ENCODE measurements at regions of chr17 and their contacts with region 1.

Region 1: DNA sequence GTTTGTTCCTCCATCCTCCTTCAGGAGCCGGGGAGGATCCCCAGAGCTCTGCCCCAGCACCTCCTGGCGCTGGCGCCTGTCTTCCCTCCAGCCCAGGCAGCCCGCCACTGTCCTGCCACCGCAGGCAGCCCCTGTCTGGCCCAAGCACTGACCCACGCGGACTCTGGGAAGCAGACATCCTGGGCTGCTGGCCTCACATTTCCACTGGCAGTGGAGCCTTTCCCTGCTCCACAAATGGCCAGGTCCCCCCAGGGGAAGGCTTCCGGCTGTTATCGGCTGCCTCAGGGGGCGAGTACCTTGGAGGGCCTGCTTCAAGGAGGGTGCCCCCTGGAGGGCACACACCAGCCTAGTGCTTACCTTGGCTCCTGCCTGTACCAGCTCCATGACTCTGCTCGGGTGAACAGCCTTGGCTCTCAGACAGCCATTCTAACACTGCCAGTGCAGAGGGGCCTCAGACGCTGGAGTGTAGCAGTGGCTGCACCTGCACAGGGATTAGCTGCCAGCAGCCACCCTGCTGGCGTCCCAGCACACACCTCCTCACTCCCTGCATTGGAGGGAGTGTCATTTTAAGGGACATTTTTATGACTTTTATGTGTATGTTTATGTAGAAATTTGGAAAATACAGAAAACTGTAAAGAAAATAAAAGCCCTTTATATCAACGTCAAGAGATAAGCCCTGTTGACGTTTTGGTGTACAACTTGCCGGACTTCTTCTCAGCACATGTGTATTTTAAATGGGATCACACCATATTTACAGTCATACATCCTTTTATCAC is 21.0 kb downstream of the ACE start:
- DNase-seq: peak; percentile 72
- ATAC-seq: peak; percentile 94
- H3K4me3 Mint-ChIP-seq: no peak overlapping the region
- H3K27ac Mint-ChIP-seq: 0 out of 2 replicates have a peak overlapping the region, but pooled peaks have one; percentile 36
- H3K4me1 Mint-ChIP-seq: peaks cover 8% of the 10 kb centered on the region
- H3K27me3 Mint-ChIP-seq: no peaks in the 10 kb centered on the region; the same call in 1 of the 2 replicates
- CTCF ChIP-seq: no peak

Region 2: DNA sequence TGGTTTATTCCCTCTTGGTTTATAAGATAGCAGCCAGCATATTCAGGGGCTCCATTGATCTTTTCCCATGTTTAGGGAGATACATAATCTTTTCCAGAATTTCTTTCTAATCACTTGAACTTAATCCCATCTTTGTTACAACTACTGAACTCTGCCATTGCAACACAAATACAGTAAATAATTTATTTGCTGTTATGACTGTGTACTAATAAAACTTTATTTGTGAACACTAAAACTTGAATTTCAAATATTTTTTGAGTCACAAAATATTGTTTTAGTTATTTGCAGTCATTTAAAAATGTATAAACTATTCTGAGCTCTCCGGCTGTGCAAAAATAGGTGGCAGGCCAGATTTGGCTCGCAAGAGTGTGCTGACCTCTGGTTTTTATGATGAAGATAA is 445.3 kb before region 1 on chr17:
- CTCF ChIA-PET with region 1: no interaction called
- POLR2A ChIA-PET with region 1: no interaction called
- DNase-seq: no peak
- ATAC-seq: no peak
- H3K4me3 Mint-ChIP-seq: no peak overlapping the region
- H3K27ac Mint-ChIP-seq: no peak overlapping the region
- H3K4me1 Mint-ChIP-seq: no peaks in the 10 kb centered on the region
- H3K27me3 Mint-ChIP-seq: no peaks in the 10 kb centered on the region; the same call in 1 of the 2 replicates
- CTCF ChIP-seq: no peak

Region 3: GRCh38 chr17:63445979-63446691 is 51.8 kb before region 1 on chr17 and contains the start of gene CYB561:
- CTCF ChIA-PET with region 1: interaction called, 19 read pairs
- POLR2A ChIA-PET with region 1: no interaction called
- DNase-seq: peak; percentile 76
- ATAC-seq: peak; percentile 80
- H3K4me3 Mint-ChIP-seq: peak within 1 kb of the TSS; percentile 64
- H3K27ac Mint-ChIP-seq: peak within 1 kb of the TSS; percentile 74; the same call in 1 of the 2 replicates
- H3K4me1 Mint-ChIP-seq: peaks cover 32% of the 10 kb centered on the region
- H3K27me3 Mint-ChIP-seq: peaks cover 5% of the 10 kb centered on the region
- CTCF ChIP-seq: peak; percentile 62
- total RNA-seq, gene CYB561: 27.0 to 35.1 TPM (median 28.7 TPM) in 3 replicates

Region 4: DNA sequence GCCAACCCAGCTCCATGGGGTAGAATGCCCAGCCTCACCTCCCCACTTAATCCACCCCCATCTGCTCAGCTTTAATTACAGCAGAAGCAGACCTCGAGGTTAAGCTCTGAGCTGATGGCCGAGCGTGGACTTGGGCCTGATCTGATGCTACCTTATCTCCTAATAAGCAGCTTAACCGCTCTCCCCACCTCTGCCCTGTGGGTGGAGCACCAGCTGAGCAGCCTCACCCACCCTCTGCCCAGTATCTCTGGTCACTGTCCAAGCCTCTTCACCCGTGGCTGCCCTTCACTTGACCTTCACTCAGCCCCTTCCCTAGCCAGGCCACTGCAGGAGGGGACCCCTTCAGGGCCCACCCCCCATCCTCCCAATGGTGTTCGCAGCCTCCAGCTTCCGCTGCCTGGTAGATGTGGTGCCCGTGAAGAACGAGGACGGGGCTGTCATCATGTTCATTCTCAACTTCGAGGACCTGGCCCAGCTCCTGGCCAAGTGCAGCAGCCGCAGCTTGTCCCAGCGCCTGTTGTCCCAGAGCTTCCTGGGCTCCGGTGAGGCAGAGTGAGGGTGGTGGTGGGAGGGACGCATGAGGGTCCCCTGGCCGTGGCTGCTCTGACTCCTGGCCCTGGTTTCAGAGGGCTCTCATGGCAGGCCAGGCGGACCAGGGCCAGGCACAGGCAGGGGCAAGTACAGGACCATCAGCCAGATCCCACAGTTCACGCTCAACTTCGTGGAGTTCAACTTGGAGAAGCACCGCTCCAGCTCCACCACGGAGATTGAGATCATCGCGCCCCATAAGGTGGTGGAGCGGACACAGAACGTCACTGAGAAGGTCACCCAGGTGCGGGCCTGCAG is 32.0 kb after region 1 on chr17:
- CTCF ChIA-PET with region 1: no interaction called
- POLR2A ChIA-PET with region 1: no interaction called
- DNase-seq: no peak
- ATAC-seq: no peak; the same call in 1 of the 2 replicates
- H3K4me3 Mint-ChIP-seq: no peak overlapping the region
- H3K27ac Mint-ChIP-seq: no peak overlapping the region
- H3K4me1 Mint-ChIP-seq: peaks cover 15% of the 10 kb centered on the region
- H3K27me3 Mint-ChIP-seq: no peaks in the 10 kb centered on the region
- CTCF ChIP-seq: no peak